HCT116 (cell line): ENCODE measurements at regions of chr19 and their contacts with region 1.

Region 1: GRCh38 chr19:14073261-14073924 is 807 bp downstream of the MISP3 start:
- DNase-seq: no peak
- ATAC-seq: peak; percentile 64
- H3K4me3 ChIP-seq: peak overlapping the region; percentile 66 to 72
- H3K27ac ChIP-seq: peak overlapping the region; percentile 80
- H3K4me1 ChIP-seq: peaks cover 17 to 41% of the 10 kb centered on the region in 2 experiments
- H3K27me3 ChIP-seq: no peaks in the 10 kb centered on the region
- CTCF ChIP-seq: peak in 2 of 3 experiments; percentile 19 to 22; a peak in 2 of 6 replicates
- POLR2A ChIP-seq: no peak
- RAD21 ChIP-seq: no peak

Region 2: GRCh38 chr19:13784731-13785452 is 288.5 kb before region 1 on chr19:
- CTCF ChIA-PET with region 1: no interaction called
- POLR2A ChIA-PET with region 1: no interaction called
- RAD21 ChIA-PET with region 1: no interaction called
- intact Hi-C with region 1: loop called (anchors 10 kb)
- DNase-seq: peak; percentile 39
- ATAC-seq: peak; percentile 83
- H3K4me3 ChIP-seq: no peak overlapping the region
- H3K27ac ChIP-seq: peak overlapping the region; percentile 41
- H3K4me1 ChIP-seq: peaks cover 35 to 58% of the 10 kb centered on the region in 2 experiments
- H3K27me3 ChIP-seq: no peaks in the 10 kb centered on the region
- CTCF ChIP-seq: peak; percentile 72 to 87 (median 76)
- POLR2A ChIP-seq: no peak
- RAD21 ChIP-seq: peak; percentile 96

Region 3: GRCh38 chr19:13880059-13881043 is 193.0 kb before region 1 on chr19:
- CTCF ChIA-PET with region 1: interaction called, 6 read pairs
- POLR2A ChIA-PET with region 1: interaction called, 3 read pairs
- RAD21 ChIA-PET with region 1: no interaction called
- intact Hi-C with region 1: loop called (anchors 1 kb)
- DNase-seq: peak; percentile 91
- ATAC-seq: peak; percentile 95
- H3K4me3 ChIP-seq: peak overlapping the region; percentile 15 to 45
- H3K27ac ChIP-seq: peak overlapping the region; percentile 79
- H3K4me1 ChIP-seq: peaks cover 21 to 40% of the 10 kb centered on the region in 2 experiments
- H3K27me3 ChIP-seq: no peaks in the 10 kb centered on the region
- CTCF ChIP-seq: peak; percentile 97 to 99 (median 97)
- POLR2A ChIP-seq: no peak
- RAD21 ChIP-seq: peak; percentile 100

Region 4: GRCh38 chr19:13905938-13906904 is 167.2 kb before region 1 on chr19 and contains the starts of genes BRME1 and CC2D1A:
- CTCF ChIA-PET with region 1: interaction called, 3 read pairs
- POLR2A ChIA-PET with region 1: no interaction called
- RAD21 ChIA-PET with region 1: no interaction called
- intact Hi-C with region 1: loop called (anchors 1 kb)
- DNase-seq: peak; percentile 76
- ATAC-seq: peak; percentile 97
- H3K4me3 ChIP-seq: peak within 1 kb of the TSS; percentile 69 to 80
- H3K27ac ChIP-seq: peak within 1 kb of the TSS; percentile 87
- H3K4me1 ChIP-seq: peaks cover 9 to 16% of the 10 kb centered on the region in 2 experiments; a peak in 3 of 4 replicates
- H3K27me3 ChIP-seq: no peaks in the 10 kb centered on the region
- CTCF ChIP-seq: no peak
- POLR2A ChIP-seq: no peak
- RAD21 ChIP-seq: no peak
- total RNA-seq, gene BRME1: 1.7 TPM
- total RNA-seq, gene CC2D1A: 51.5 TPM

Region 5: DNA sequence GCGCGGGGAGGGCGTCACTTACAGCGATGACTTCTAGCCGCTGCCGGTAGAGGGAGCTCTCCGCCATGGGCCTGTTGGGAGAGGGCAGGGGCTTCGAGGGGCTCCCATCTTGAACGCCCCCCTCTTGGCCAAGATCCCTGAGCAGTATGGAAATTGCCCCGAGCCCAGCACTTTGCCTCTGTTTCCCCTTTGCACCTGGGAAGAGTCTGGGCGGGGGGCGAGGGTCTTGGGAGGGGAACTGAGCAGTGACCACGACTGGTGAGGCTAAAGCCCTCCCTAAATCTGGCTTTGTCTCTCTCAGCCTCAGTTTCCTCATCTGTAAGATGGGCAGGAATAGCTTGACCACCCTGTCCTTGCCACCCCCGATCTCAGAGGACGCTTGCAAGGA is 14.3 kb before region 1 on chr19:
- CTCF ChIA-PET with region 1: interaction called, 83 read pairs
- POLR2A ChIA-PET with region 1: no interaction called
- RAD21 ChIA-PET with region 1: no interaction called
- intact Hi-C with region 1: no loop called
- DNase-seq: no peak
- ATAC-seq: peak; percentile 55; the same call in 1 of the 2 replicates
- H3K4me3 ChIP-seq: peak overlapping the region in 1 of 2 experiments; percentile 56; a peak in 2 of 4 replicates
- H3K27ac ChIP-seq: no peak overlapping the region
- H3K4me1 ChIP-seq: peaks cover 22 to 36% of the 10 kb centered on the region in 2 experiments
- H3K27me3 ChIP-seq: no peaks in the 10 kb centered on the region
- CTCF ChIP-seq: peak; percentile 41 to 92 (median 90); a peak in 5 of 6 replicates
- POLR2A ChIP-seq: no peak
- RAD21 ChIP-seq: peak; percentile 36

Region 6: GRCh38 chr19:14114854-14115253 is 41.5 kb after region 1 on chr19:
- CTCF ChIA-PET with region 1: interaction called, 8 read pairs
- POLR2A ChIA-PET with region 1: no interaction called
- RAD21 ChIA-PET with region 1: no interaction called
- intact Hi-C with region 1: loop called (anchors 5 kb)
- DNase-seq: no peak
- ATAC-seq: no peak
- H3K4me3 ChIP-seq: peak overlapping the region in 1 of 2 experiments; percentile 88; a peak in 1 of 4 replicates
- H3K27ac ChIP-seq: peak overlapping the region; percentile 68
- H3K4me1 ChIP-seq: peaks cover 36 to 47% of the 10 kb centered on the region in 2 experiments
- H3K27me3 ChIP-seq: no peaks in the 10 kb centered on the region
- CTCF ChIP-seq: peak; percentile 68 to 80 (median 74); a peak in 5 of 6 replicates
- POLR2A ChIP-seq: no peak
- RAD21 ChIP-seq: peak; percentile 72